ENCODE measurements at regions of chr5 and their contacts with region 1.

Region 1: DNA sequence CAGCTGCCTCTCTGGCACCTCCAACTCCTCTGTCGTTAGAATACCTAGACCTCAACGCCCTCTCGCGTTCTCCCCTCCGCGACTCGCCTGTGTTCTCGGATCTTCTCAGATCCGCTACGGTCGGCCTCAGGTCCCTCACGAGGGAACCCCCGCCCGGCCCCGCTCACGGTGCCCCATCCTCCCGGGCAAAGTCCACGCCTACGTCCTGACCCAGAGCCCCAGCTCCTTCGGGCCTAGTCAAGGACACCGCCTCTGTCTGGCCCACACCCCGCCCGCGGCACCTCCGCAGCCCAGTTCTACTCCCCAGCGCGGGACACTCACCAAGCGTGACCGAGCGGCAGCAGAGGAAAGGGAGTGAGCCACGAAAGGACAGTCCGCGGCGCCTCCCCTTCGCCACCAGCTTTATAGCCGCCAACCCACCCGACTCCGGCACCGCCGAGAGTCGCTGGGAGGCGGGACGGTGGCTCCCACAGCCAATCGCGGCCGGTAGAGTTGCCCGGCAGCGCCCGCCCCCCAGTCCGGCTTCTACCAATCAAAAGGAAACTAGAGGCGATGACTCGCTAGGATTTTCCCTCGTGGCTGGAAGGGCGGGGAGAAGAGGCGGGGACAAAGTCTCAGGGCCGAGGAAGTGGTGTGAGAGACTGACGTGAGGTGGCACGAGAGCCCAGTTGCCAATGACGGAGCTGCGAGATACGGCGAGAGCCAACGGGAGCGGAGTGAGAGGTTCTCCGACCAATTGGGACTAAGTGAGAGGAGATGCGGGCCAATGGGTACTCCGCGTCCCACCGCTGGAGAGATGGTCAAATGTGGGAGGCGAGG is at the start of gene HMGCS1:
- DNase-seq: peak; percentile 99 to 100
- H3K4me3 ChIP-seq: peak within 1 kb of the TSS; percentile 85 to 94
- H3K27ac ChIP-seq: peak within 1 kb of the TSS; percentile 92 to 93
- H3K4me1 ChIP-seq: peaks cover 0 to 8% of the 10 kb centered on the region in 2 donors
- H3K27me3 ChIP-seq: no peaks in the 10 kb centered on the region
- CTCF ChIP-seq: no peak
- total RNA-seq, gene HMGCS1: 36.5 TPM

Region 2: GRCh38 chr5:41903892-41904799 is 1409.1 kb before region 1 on chr5 and contains the start of gene RIMOC1:
- intact Hi-C with region 1: loop called (anchors 10 kb)
- DNase-seq: peak; percentile 98 to 100
- H3K4me3 ChIP-seq: peak within 1 kb of the TSS; percentile 75 to 79
- H3K27ac ChIP-seq: peak within 1 kb of the TSS; percentile 87 to 94
- H3K4me1 ChIP-seq: peaks cover 3 to 6% of the 10 kb centered on the region in 2 donors
- H3K27me3 ChIP-seq: no peaks in the 10 kb centered on the region
- CTCF ChIP-seq: no peak
- total RNA-seq, gene RIMOC1: 11.1 TPM

Region 3: DNA sequence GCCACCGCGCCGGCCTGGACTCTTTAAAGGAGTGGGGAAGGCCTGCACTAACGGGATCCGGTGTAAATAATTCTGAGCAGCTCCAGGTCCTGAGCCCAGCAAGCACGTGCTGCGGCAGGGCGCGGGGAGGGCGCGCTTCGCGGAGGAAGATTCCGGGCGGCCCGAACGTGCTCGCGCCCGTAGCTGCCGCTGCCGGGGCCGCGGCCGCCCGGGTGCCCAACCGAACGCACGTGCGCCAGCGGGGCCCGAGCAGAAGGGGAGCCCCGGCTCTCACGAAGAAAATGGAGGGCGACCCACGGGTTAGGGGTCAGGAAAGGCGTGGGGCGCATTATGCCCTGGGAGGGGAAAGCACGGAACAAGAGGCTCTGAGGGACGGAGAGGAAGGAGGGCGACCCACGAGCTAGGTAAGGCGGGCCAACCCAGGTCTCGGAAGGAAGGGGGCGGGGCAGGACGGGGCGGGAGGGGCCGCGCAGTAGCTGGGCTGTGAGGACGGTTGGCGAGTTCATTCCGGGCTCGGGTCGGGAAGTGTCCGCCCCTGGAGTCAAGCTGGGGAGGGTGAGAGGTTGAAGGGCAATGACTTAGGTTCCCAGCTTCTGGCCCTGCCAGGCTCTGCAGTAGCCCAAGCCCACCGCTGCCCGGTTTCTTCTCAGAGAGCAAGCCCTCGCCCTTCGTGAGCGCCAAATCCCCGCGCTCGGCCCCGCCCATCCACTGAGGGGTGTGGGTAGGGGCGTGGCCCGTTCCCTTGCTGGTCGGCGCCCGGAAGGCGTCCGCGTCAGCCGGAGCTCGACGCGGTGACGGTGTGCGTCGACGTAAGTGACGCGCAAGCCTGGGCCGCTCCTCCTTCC is 192.3 kb before region 1 on chr5 and contains the start of gene ZNF131:
- intact Hi-C with region 1: loop called (anchors 1 kb)
- DNase-seq: peak; percentile 84 to 98
- H3K4me3 ChIP-seq: peak within 1 kb of the TSS; percentile 85 to 87
- H3K27ac ChIP-seq: peak within 1 kb of the TSS; percentile 90 to 99
- H3K4me1 ChIP-seq: peaks cover 0 to 20% of the 10 kb centered on the region in 2 donors
- H3K27me3 ChIP-seq: no peaks in the 10 kb centered on the region
- CTCF ChIP-seq: peak in 1 of 3 experiments; percentile 19
- total RNA-seq, gene ZNF131: 61.2 TPM

Region 4: DNA sequence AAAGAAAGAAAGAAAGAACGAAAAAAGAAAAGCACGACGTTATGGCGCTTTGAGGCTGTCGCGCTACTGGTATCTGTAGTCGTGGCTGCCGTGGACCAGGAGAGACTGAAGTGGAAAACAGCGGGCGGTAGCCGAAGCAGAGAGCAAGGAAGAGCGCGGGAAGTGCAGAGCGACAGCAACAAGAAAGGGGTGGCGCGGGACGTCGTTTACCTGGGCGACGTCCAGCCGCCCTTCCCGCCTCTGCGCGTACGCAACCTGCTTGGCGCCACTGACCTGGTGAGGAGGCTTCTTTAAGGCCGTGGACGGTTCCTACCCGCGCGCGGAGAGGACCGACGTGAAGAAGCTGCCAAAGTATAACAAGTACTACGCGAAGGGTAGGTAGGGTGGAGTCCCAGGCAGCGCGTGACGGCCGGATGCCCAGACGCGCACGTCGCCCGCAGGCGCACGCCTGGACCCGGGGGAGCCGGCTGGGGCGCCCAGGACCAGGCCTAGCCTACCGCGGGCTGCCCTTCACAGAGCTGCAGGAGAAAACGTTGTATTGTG is 83.6 kb after region 1 on chr5:
- intact Hi-C with region 1: loop called (anchors 5 kb)
- DNase-seq: peak in 1 of 2 donors; percentile 64
- H3K4me3 ChIP-seq: peak overlapping the region; percentile 55 to 67
- H3K27ac ChIP-seq: no peak overlapping the region
- H3K4me1 ChIP-seq: no peaks in the 10 kb centered on the region
- H3K27me3 ChIP-seq: no peaks in the 10 kb centered on the region
- CTCF ChIP-seq: no peak

Region 5: DNA sequence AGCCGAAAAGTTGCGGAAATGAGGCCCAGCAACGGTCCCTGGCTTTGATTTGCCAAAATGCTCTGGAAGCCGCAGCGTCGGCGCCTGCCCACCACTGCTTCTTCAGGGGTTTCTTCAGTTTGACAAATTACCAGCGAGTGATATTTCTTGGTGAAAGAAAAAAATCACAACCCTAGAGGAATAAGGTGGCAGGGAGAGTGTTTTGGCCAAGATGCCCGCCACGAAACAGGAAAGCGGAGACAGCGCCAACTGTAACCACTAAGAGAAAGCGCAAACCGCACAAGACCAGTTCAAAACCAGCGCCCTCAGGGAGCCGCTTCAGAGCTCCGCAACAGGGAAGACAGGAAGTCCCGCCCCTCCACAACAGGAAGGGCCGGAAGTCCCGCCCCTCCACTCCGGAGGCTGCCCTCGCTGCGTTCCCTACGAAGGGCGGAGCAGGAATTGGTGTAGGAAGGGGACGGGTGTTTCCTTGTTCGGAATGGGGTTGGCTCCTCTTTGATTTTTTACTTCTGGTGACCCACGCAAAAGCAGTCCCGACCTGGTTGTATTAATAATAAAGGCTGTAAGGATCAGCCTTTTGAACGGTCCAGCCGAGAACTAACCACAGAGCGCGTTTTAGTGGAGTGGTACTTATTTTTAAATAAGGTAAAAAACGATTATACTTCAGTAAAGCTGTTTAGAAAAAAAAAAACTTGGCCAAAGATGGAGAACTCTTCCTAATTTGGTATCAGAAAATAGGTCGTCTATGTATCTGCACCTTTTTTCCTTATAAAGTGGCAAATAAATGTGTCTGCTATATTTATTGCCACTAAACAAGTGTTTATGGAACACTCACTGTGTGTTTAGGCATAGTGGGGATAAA is 201.8 kb after region 1 on chr5 and contains the start of gene C5orf34:
- intact Hi-C with region 1: loop called (anchors 2 kb)
- DNase-seq: peak; percentile 89 to 98
- H3K4me3 ChIP-seq: peak within 1 kb of the TSS; percentile 39 to 87
- H3K27ac ChIP-seq: peak within 1 kb of the TSS; percentile 84 to 88
- H3K4me1 ChIP-seq: peaks cover 0 to 3% of the 10 kb centered on the region in 2 donors
- H3K27me3 ChIP-seq: no peaks in the 10 kb centered on the region
- CTCF ChIP-seq: no peak
- total RNA-seq, gene C5orf34: not detected

Region 6: GRCh38 chr5:44808435-44809214 is 1495.4 kb after region 1 on chr5 and contains the start of gene MRPS30:
- intact Hi-C with region 1: loop called (anchors 2 kb)
- DNase-seq: peak; percentile 78 to 97
- H3K4me3 ChIP-seq: peak within 1 kb of the TSS; percentile 66 to 79
- H3K27ac ChIP-seq: peak within 1 kb of the TSS; percentile 62 to 81
- H3K4me1 ChIP-seq: peaks cover 2 to 8% of the 10 kb centered on the region in 2 donors
- H3K27me3 ChIP-seq: no peaks in the 10 kb centered on the region
- CTCF ChIP-seq: peak in 2 of 3 experiments; percentile 18 to 43
- total RNA-seq, gene MRPS30: 39.9 TPM